ENCODE measurements at regions of chr5 and their contacts with region 1.

Region 1: DNA sequence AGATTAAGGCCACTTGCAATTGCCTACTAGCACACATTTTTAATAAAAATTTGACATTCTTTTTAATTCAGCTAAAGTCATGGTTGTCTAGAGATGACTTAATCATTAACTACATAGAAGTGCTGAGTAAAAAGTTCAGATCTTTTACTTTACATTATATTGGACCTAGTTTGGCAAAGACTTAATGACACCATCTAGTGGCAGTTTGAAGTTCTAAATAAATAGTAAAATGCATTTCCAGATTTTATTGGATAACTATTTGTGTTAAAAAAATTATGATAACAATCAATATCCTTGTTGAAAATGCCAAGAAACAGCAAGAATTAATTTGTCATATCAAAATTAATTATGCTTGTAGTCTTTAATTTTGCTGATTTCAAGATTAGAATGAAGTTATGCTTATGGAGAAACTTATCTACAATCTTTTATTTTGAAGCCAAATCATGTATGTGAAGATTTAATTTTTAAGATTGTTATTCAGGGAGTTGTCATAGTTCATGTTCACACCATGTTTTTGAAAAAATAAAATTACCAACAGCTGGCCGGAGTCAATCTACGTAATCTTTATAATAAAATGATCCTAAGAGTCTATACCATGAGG is 69.6 kb upstream of the PJA2 start:
- DNase-seq: no peak
- ATAC-seq: no peak
- H3K4me3 ChIP-seq: no peak overlapping the region
- H3K27ac ChIP-seq: no peak overlapping the region
- H3K4me1 ChIP-seq: peaks cover 9% of the 10 kb centered on the region
- H3K27me3 ChIP-seq: no peaks in the 10 kb centered on the region
- CTCF ChIP-seq: peak; percentile 26

Region 2: GRCh38 chr5:108642167-108642906 is 837.0 kb before region 1 on chr5:
- intact Hi-C with region 1: loop called in 1 of 2 experiments (anchors 10 kb)
- DNase-seq: peak; percentile 26 to 52
- ATAC-seq: peak; percentile 75 to 89 (median 84)
- H3K4me3 ChIP-seq: no peak overlapping the region
- H3K27ac ChIP-seq: no peak overlapping the region
- H3K4me1 ChIP-seq: no peaks in the 10 kb centered on the region
- H3K27me3 ChIP-seq: peaks cover 0 to 2% (median 0%) of the 10 kb centered on the region in 3 donors
- CTCF ChIP-seq: peak; percentile 78

Measured in psoas muscle (tissue), 8 donors.